GM12878 (cell line): ENCODE measurements at regions of chr20 and their contacts with region 1.

Region 1: DNA sequence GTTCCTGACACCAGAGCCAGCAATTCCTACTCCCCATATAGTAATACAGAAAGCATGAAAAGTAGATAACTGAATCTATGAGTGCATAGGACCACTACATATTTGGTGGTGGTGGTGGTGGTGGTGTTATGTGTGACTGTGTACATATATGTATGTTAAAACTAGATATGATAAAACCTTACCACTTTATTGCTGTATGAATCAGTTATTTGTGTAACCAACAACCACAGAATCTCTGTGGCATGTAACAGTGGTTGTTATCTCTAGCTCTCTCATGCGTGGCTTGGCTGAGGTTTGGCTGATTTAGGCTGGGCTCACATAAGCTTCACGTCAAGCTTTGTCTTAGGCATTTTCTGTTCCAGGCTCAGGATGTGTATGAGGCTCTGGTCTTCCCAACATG is 55.7 kb downstream of the PLCB1 start:
- DNase-seq: no peak
- ATAC-seq: no peak
- H3K4me3 ChIP-seq: no peak overlapping the region
- H3K27ac ChIP-seq: no peak overlapping the region
- H3K4me1 ChIP-seq: no peaks in the 10 kb centered on the region
- H3K27me3 ChIP-seq: no peaks in the 10 kb centered on the region
- CTCF ChIP-seq: no peak
- EP300 ChIP-seq: no peak
- POLR2A ChIP-seq: no peak
- RAD21 ChIP-seq: no peak

Region 2: DNA sequence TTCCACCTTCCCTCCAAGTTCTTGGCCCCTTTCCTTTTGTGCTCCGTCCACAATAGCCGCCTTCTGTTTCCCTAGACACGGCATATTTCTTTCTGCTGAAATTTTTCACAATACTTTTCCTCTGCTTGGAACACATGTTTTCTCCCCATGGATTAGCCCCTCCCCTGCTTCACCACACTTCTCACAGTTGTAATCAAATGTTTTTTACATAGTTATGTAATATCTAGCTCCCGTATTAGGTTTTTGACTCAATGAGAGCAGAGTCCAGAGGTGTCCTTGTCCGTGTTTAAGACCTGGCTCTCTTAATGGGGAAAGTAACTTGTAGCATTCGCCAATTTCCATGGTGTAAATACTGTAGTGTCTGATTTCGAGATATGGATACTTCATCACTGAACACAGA is 21.0 kb before region 1 on chr20:
- CTCF ChIA-PET with region 1: no interaction called
- POLR2A ChIA-PET with region 1: no interaction called
- RAD21 ChIA-PET with region 1: no interaction called
- SMC1A ChIA-PET with region 1: no interaction called
- in situ Hi-C with region 1: no loop called
- intact Hi-C with region 1: loop called (anchors 2 kb)
- DNase-seq: no peak
- ATAC-seq: no peak
- H3K4me3 ChIP-seq: no peak overlapping the region
- H3K27ac ChIP-seq: no peak overlapping the region
- H3K4me1 ChIP-seq: no peaks in the 10 kb centered on the region
- H3K27me3 ChIP-seq: no peaks in the 10 kb centered on the region
- CTCF ChIP-seq: no peak
- EP300 ChIP-seq: no peak
- POLR2A ChIP-seq: no peak
- RAD21 ChIP-seq: no peak

Region 3: GRCh38 chr20:8208998-8209440 is 21.3 kb after region 1 on chr20:
- CTCF ChIA-PET with region 1: no interaction called
- POLR2A ChIA-PET with region 1: no interaction called
- RAD21 ChIA-PET with region 1: no interaction called
- SMC1A ChIA-PET with region 1: no interaction called
- in situ Hi-C with region 1: no loop called
- intact Hi-C with region 1: no loop called
- DNase-seq: peak; percentile 32
- ATAC-seq: peak; percentile 63
- H3K4me3 ChIP-seq: no peak overlapping the region
- H3K27ac ChIP-seq: no peak overlapping the region
- H3K4me1 ChIP-seq: peaks cover 6% of the 10 kb centered on the region; the same call in 1 of the 2 replicates
- H3K27me3 ChIP-seq: no peaks in the 10 kb centered on the region
- CTCF ChIP-seq: no peak
- EP300 ChIP-seq: peak in 1 of 2 experiments; percentile 42; a peak in 1 of 4 replicates
- POLR2A ChIP-seq: no peak
- RAD21 ChIP-seq: no peak

Region 4: DNA sequence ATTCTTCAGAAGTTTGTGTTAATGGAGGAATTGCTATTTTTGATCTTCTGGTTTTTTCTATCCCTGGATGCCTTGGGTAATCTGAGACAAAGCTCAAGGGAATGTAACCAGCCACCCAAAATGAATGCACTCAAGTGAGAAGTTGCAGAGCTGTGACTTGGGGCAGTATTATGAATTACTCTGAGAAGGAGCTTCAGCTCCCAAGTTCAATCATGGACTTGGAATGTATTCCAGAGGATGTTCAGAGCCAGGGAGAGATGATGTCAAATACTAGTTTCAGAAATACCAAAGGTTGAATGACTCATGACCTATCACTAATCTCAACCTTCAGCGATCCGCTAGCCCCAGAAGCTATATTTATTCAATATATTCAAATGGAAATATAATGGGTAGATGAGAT is 506.0 kb after region 1 on chr20:
- CTCF ChIA-PET with region 1: no interaction called
- POLR2A ChIA-PET with region 1: no interaction called
- RAD21 ChIA-PET with region 1: no interaction called
- SMC1A ChIA-PET with region 1: no interaction called
- in situ Hi-C with region 1: no loop called
- intact Hi-C with region 1: no loop called
- DNase-seq: no peak
- ATAC-seq: no peak
- H3K4me3 ChIP-seq: no peak overlapping the region
- H3K27ac ChIP-seq: no peak overlapping the region
- H3K4me1 ChIP-seq: no peaks in the 10 kb centered on the region
- H3K27me3 ChIP-seq: no peaks in the 10 kb centered on the region
- CTCF ChIP-seq: no peak
- EP300 ChIP-seq: no peak
- POLR2A ChIP-seq: no peak
- RAD21 ChIP-seq: no peak